ENCODE measurements at regions of chr7 and their contacts with region 1.

Region 1: GRCh38 chr7:105849122-105849855 is 27.1 kb downstream of the ATXN7L1 start:
- DNase-seq: no peak
- H3K4me3 ChIP-seq: no peak overlapping the region
- H3K27ac ChIP-seq: no peak overlapping the region
- H3K4me1 ChIP-seq: no peaks in the 10 kb centered on the region
- CTCF ChIP-seq: no peak

Region 2: GRCh38 chr7:105782391-105783042 is 66.8 kb before region 1 on chr7:
- CTCF ChIA-PET with region 1: no interaction called
- POLR2A ChIA-PET with region 1: no interaction called
- intact Hi-C with region 1: loop called (anchors 10 kb)
- DNase-seq: no peak
- H3K4me3 ChIP-seq: no peak overlapping the region
- H3K27ac ChIP-seq: no peak overlapping the region
- H3K4me1 ChIP-seq: no peaks in the 10 kb centered on the region
- CTCF ChIP-seq: no peak